ENCODE measurements at regions of chrX and their contacts with region 1.

Region 1: GRCh38 chrX:56563231-56564161 is at the start of gene UBQLN2:
- DNase-seq: peak; percentile 90
- ATAC-seq: peak; percentile 98
- total RNA-seq, gene UBQLN2: 29.5 TPM

Region 2: GRCh38 chrX:57121162-57121741 is 557.8 kb after region 1 on chrX and contains the start of gene SPIN2B:
- intact Hi-C with region 1: loop called (anchors 10 kb)
- DNase-seq: peak; percentile 86
- ATAC-seq: peak; percentile 100
- total RNA-seq, gene SPIN2B: 6.9 TPM